ENCODE measurements at regions of chr3 and their contacts with region 1.

Region 1: GRCh38 chr3:157794771-157795170 is 291.6 kb upstream of the VEPH1 start:
- DNase-seq: peak in 1 of 2 experiments; percentile 45
- H3K4me3 ChIP-seq: no peak overlapping the region
- H3K27ac ChIP-seq: no peak overlapping the region
- H3K4me1 ChIP-seq: peaks cover 13% of the 10 kb centered on the region
- H3K27me3 ChIP-seq: no peaks in the 10 kb centered on the region
- CTCF ChIP-seq: no peak

Region 2: GRCh38 chr3:157767602-157768001 is 27.2 kb before region 1 on chr3:
- CTCF ChIA-PET with region 1: no interaction called
- POLR2A ChIA-PET with region 1: no interaction called
- intact Hi-C with region 1: no loop called
- DNase-seq: peak in 1 of 2 experiments; percentile 51
- H3K4me3 ChIP-seq: no peak overlapping the region
- H3K27ac ChIP-seq: no peak overlapping the region
- H3K4me1 ChIP-seq: no peaks in the 10 kb centered on the region
- H3K27me3 ChIP-seq: no peaks in the 10 kb centered on the region
- CTCF ChIP-seq: peak; percentile 38; the same call in 1 of the 2 replicates

Region 3: GRCh38 chr3:157865352-157866000 is 70.7 kb after region 1 on chr3:
- CTCF ChIA-PET with region 1: no interaction called
- POLR2A ChIA-PET with region 1: no interaction called
- intact Hi-C with region 1: no loop called
- DNase-seq: peak in 1 of 2 experiments; percentile 24
- H3K4me3 ChIP-seq: no peak overlapping the region
- H3K27ac ChIP-seq: no peak overlapping the region
- H3K4me1 ChIP-seq: no peaks in the 10 kb centered on the region
- H3K27me3 ChIP-seq: no peaks in the 10 kb centered on the region
- CTCF ChIP-seq: peak; percentile 78

Region 4: GRCh38 chr3:158652463-158652862 is 857.7 kb after region 1 on chr3:
- CTCF ChIA-PET with region 1: no interaction called
- POLR2A ChIA-PET with region 1: interaction called, 12 read pairs
- intact Hi-C with region 1: no loop called
- DNase-seq: no peak
- H3K4me3 ChIP-seq: no peak overlapping the region
- H3K27ac ChIP-seq: no peak overlapping the region
- H3K4me1 ChIP-seq: no peaks in the 10 kb centered on the region
- H3K27me3 ChIP-seq: no peaks in the 10 kb centered on the region
- CTCF ChIP-seq: no peak